Activated CD8-positive, alpha-beta T cell treated with anti-CD3 and anti-CD28 coated beads, Interleukin-2, amount 10 ng/mL, durations not matched to agents 7 days and 5 days (primary cell): ENCODE measurements at regions of chr6 and their contacts with region 1.

Region 1: GRCh38 chr6:165850434-165851019 is 187.5 kb upstream of the PDE10A start:
- DNase-seq: peak; percentile 65
- ATAC-seq: peak; percentile 74
- H3K4me3 Mint-ChIP-seq: no peak overlapping the region
- H3K27ac Mint-ChIP-seq: no peak overlapping the region
- H3K4me1 Mint-ChIP-seq: peaks cover 3% of the 10 kb centered on the region
- H3K27me3 Mint-ChIP-seq: peaks cover 47% of the 10 kb centered on the region

Region 2: DNA sequence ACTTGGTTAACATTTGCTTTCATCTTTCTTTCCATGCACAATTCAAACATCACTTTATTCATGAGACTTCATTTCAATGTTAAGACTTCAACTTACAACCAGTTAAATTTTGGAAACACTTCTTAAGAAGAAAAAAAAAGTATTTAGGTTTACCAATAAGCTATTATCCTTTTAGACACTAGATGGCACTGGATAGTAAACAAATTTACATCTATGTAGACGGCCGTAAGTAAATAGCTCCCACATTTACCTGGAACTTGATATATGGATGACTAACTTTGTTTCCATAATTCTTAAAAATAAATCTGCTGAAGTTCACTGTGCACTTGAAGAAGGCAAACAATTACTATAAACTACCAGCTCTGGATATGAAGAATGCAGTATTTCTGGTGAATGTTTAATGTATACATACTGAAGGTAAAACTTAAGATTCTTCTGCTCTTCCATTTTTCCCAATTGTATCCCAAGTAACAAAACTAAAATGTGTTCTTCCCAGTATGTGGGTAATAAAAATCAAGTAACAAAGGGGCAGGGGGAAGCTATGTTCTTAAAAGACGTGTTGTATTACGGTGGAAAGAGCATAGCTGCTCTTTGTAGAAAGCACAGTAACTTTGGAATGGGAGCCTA is 410.5 kb before region 1 on chr6:
- CTCF ChIA-PET with region 1: interaction called, 19 read pairs
- POLR2A ChIA-PET with region 1: no interaction called
- DNase-seq: no peak
- ATAC-seq: no peak
- H3K4me3 Mint-ChIP-seq: no peak overlapping the region
- H3K27ac Mint-ChIP-seq: no peak overlapping the region
- H3K4me1 Mint-ChIP-seq: no peaks in the 10 kb centered on the region
- H3K27me3 Mint-ChIP-seq: no peaks in the 10 kb centered on the region

Region 3: DNA sequence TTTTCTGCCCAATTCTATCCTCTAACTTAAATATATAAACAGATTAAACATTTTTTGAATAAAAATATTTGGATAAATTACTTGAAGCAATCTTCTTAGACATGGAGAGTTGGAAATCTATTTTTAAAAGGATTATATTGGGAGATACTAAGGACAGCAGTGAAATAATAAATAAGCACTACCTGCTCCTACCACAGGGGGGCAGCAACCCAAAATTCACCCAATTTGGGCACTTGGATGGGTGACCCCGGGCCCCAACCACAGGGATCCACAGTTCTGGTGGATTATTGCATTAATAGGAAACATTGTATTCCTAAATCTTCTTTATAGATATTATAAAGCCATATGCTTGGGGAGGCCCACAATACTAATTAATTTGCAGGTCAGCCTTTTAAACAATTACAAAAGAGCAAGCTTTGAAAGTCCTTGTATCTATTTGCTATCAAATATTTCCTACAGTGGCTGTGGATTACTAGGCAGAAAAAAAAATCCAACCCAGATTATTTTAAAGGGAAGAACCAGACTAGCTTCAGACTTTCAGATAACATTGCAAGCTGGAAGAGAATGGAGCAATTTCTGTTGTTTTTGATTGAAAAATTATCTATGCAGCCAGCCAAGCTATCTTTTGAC is 121.1 kb before region 1 on chr6:
- CTCF ChIA-PET with region 1: interaction called, 12 read pairs
- POLR2A ChIA-PET with region 1: no interaction called
- DNase-seq: peak; percentile 43
- ATAC-seq: peak; percentile 27
- H3K4me3 Mint-ChIP-seq: no peak overlapping the region
- H3K27ac Mint-ChIP-seq: no peak overlapping the region
- H3K4me1 Mint-ChIP-seq: no peaks in the 10 kb centered on the region
- H3K27me3 Mint-ChIP-seq: no peaks in the 10 kb centered on the region

Region 4: DNA sequence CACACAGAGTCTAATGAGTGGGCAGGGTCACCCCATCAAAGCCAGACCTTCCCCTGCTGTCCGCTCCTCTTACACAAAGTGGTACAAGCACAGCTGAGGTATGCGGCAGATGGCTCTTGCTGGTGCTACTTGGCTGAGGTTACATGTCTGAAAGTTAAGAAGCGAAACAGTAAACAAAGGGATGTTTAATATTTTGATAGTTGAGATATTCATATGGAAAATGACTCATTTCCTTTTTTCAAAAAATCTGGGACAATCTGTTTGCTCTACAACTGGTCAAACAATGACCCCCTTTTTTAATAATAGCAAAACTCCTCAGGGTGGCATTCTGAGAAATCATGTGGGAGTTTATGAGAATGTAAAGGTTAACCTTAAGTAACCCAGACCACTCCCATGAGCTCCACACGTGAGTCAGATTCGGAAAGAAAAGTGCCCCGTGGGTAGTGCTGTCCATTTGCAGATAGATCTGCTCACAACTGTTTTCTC is 71.8 kb after region 1 on chr6:
- CTCF ChIA-PET with region 1: no interaction called
- POLR2A ChIA-PET with region 1: no interaction called
- DNase-seq: no peak
- ATAC-seq: no peak
- H3K4me3 Mint-ChIP-seq: no peak overlapping the region
- H3K27ac Mint-ChIP-seq: no peak overlapping the region
- H3K4me1 Mint-ChIP-seq: no peaks in the 10 kb centered on the region
- H3K27me3 Mint-ChIP-seq: no peaks in the 10 kb centered on the region